ENCODE measurements at regions of chr12 and their contacts with region 1.

Region 1: GRCh38 chr12:6764011-6764828 is 1.9 kb upstream of the PTMS start:
- DNase-seq: peak; percentile 80
- ATAC-seq: peak; percentile 72
- H3K4me3 ChIP-seq: peak overlapping the region in 1 of 5 experiments; percentile 14
- H3K4me3 Mint-ChIP-seq: peak overlapping the region; percentile 61
- H3K27ac ChIP-seq: no peak overlapping the region
- H3K27ac Mint-ChIP-seq: peak overlapping the region; percentile 28
- H3K4me1 ChIP-seq: peaks cover 33 to 36% of the 10 kb centered on the region in 2 donors
- H3K4me1 Mint-ChIP-seq: peaks cover 29% of the 10 kb centered on the region
- H3K27me3 ChIP-seq: peaks cover 0 to 44% (median 27%) of the 10 kb centered on the region in 4 experiments
- H3K27me3 Mint-ChIP-seq: peaks cover 43% of the 10 kb centered on the region
- CTCF ChIP-seq: no peak

Region 2: GRCh38 chr12:6563448-6564050 is 200.7 kb before region 1 on chr12:
- CTCF ChIA-PET with region 1: no interaction called
- POLR2A ChIA-PET with region 1: no interaction called
- intact Hi-C with region 1: loop called (anchors 1 kb)
- DNase-seq: peak; percentile 76
- ATAC-seq: peak; percentile 28
- H3K4me3 ChIP-seq: no peak overlapping the region
- H3K4me3 Mint-ChIP-seq: no peak overlapping the region
- H3K27ac ChIP-seq: no peak overlapping the region
- H3K27ac Mint-ChIP-seq: peak overlapping the region; percentile 10
- H3K4me1 ChIP-seq: peaks cover 7 to 13% of the 10 kb centered on the region in 2 donors
- H3K4me1 Mint-ChIP-seq: peaks cover 28% of the 10 kb centered on the region
- H3K27me3 ChIP-seq: no peaks in the 10 kb centered on the region
- H3K27me3 Mint-ChIP-seq: no peaks in the 10 kb centered on the region
- CTCF ChIP-seq: peak; percentile 95

Region 3: GRCh38 chr12:6708960-6709394 is 55.2 kb before region 1 on chr12:
- CTCF ChIA-PET with region 1: no interaction called
- POLR2A ChIA-PET with region 1: no interaction called
- intact Hi-C with region 1: no loop called
- DNase-seq: no peak
- ATAC-seq: no peak
- H3K4me3 ChIP-seq: no peak overlapping the region
- H3K4me3 Mint-ChIP-seq: peak overlapping the region; percentile 89
- H3K27ac ChIP-seq: no peak overlapping the region
- H3K27ac Mint-ChIP-seq: peak overlapping the region; percentile 75
- H3K4me1 ChIP-seq: no peaks in the 10 kb centered on the region
- H3K4me1 Mint-ChIP-seq: peaks cover 9% of the 10 kb centered on the region
- H3K27me3 ChIP-seq: peaks cover 0 to 34% (median 10%) of the 10 kb centered on the region in 4 experiments
- H3K27me3 Mint-ChIP-seq: peaks cover 20% of the 10 kb centered on the region
- CTCF ChIP-seq: no peak

Measured in B cell (primary cell).